Endothelial cell of umbilical vein (primary cell): ENCODE measurements at regions of chr1 and their contacts with region 1.

Region 1: GRCh38 chr1:6385488-6386191 is 7.9 kb downstream of the ACOT7 start:
- DNase-seq: peak; percentile 48
- H3K4me3 ChIP-seq: no peak overlapping the region
- H3K27ac ChIP-seq: peak overlapping the region; percentile 62
- H3K4me1 ChIP-seq: peaks cover 12% of the 10 kb centered on the region
- H3K27me3 ChIP-seq: no peaks in the 10 kb centered on the region
- CTCF ChIP-seq: no peak
- POLR2A ChIP-seq: no peak

Region 2: DNA sequence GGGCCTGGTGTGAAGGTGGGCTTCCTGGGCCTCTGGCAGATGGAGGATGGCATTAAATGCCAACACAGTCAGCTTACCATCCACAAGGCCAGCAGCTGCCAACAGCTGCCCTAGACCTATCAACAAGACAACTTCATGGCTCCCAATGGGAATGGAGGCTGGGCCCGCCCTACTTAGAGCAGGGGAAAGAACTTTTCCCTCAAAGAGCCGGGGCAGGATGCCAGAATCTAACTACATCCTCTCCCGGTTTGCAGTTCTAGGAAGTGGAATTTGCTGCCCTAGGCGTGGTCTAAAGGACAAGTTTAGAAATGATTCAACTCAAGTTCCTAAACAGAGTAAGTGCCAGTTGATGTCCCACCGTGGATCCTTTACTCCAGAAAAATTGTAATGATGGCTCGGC is 163.0 kb before region 1 on chr1:
- CTCF ChIA-PET with region 1: no interaction called
- POLR2A ChIA-PET with region 1: no interaction called
- dilution Hi-C with region 1: no loop called
- intact Hi-C with region 1: no loop called
- DNase-seq: no peak
- H3K4me3 ChIP-seq: no peak overlapping the region
- H3K27ac ChIP-seq: no peak overlapping the region
- H3K4me1 ChIP-seq: no peaks in the 10 kb centered on the region
- H3K27me3 ChIP-seq: no peaks in the 10 kb centered on the region
- CTCF ChIP-seq: no peak
- POLR2A ChIP-seq: no peak

Region 3: GRCh38 chr1:6370006-6370405 is 15.6 kb before region 1 on chr1:
- CTCF ChIA-PET with region 1: interaction called, 237 read pairs
- POLR2A ChIA-PET with region 1: no interaction called
- dilution Hi-C with region 1: no loop called
- intact Hi-C with region 1: no loop called
- DNase-seq: no peak
- H3K4me3 ChIP-seq: no peak overlapping the region
- H3K27ac ChIP-seq: no peak overlapping the region
- H3K4me1 ChIP-seq: no peaks in the 10 kb centered on the region
- H3K27me3 ChIP-seq: no peaks in the 10 kb centered on the region
- CTCF ChIP-seq: no peak
- POLR2A ChIP-seq: no peak